HEK293T (cell line): ENCODE measurements at regions of chr20 and their contacts with region 1.

Region 1: DNA sequence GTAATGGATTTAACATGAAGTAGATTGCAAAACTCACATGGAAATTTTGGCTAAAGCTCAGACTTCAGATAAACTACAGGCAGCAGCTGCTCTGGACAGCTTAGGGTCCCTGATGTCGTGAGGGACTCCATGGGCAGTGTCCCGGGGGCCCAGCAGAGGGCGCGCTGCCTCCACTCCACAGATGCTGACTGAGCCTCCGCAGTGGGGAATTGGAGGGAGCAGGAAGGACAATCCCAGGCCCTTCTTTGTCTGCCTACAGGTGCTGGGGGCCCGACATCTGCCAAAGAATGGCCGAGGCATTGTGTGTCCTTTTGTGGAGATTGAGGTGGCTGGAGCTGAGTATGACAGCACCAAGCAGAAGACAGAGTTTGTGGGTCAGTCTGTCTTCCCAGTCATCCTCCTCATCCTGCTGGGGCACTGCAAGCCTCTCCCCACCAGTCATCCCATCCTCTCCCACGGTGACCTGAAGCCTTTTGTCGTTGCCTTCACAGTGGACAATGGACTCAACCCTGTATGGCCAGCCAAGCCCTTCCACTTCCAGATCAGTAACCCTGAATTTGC is 35.9 kb downstream of the PLCG1 start:
- DNase-seq: peak; percentile 83

Region 2: DNA sequence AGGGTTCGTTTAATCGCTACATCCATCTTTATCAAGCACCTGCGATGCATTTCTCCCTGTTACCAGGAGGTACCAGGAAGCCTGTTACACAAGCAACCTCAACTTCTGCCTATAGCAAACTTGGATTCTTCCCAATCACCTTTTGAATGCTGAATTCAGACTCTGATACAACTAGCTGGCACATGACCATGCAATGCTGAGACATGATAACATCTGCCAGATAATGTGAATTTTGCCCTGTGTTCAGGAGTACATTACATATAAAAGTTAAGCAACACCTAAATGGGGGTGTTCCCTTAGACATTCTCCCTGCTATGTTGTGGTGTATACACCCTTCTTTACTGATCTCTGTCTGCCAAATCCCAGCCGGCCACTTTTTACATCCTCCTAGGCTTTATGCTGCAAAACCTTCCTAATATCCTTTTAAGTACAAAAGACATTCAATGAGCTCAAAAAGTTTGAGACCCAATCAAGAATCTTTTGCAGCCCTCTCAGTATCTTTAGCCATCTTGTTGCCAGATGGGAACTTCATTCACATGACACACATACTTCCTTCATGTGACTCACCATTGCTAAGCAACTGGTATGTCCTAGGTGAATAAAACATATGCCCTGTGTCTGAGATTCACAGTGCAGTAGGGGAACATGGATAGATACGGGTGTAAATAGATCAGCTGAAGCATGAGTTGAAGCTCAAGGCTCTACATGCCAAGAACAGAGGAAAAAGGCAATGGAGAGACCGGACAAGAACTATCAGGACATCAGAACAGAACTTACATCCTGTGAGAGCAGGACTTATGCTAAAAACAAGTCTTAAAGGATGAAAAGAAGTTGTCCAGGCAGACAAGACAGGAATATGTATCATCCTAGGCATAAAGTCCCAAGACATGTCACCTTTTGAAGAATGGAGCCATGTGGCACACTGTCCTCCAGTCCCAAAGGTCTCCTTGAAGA is 60.0 kb after region 1 on chr20:
- CTCF ChIA-PET with region 1: interaction called, 15 read pairs
- POLR2A ChIA-PET with region 1: no interaction called
- DNase-seq: no peak